PC-3 (cell line): ENCODE measurements at regions of chr18 and their contacts with region 1.

Region 1: DNA sequence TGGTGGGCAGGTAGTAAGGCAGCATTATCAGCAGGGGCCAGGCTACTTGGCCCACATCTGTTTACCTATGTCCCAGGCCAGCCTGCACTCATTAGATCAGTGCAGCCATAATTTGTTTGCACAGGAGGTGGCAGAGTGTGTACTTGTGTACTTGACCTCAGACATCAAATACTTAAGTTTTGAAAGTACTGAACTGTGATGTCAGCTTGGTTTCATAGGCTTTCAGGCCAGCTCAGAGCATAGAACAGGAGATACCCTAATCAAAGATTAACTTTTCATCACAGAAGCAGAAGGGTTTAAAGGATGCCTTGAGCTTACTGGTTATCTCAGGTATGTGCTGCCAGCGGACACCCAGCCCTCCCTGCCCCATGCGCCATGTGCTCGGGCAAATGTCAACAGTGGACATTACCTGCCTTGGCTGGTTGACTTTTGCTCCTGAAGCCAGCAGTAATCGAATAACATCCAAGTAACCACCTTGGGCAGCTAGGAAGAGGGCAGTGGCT is 33.2 kb downstream of the ANKRD29 start:
- DNase-seq: peak; percentile 37
- ATAC-seq: peak; percentile 28
- H3K4me3 ChIP-seq: no peak overlapping the region
- H3K27ac ChIP-seq: peak overlapping the region; percentile 98
- H3K4me1 ChIP-seq: peaks cover 49% of the 10 kb centered on the region
- H3K27me3 ChIP-seq: no peaks in the 10 kb centered on the region
- CTCF ChIP-seq: no peak

Region 2: GRCh38 chr18:23540867-23541266 is 88.6 kb before region 1 on chr18:
- CTCF ChIA-PET with region 1: no interaction called
- POLR2A ChIA-PET with region 1: no interaction called
- intact Hi-C with region 1: no loop called
- DNase-seq: no peak
- ATAC-seq: no peak
- H3K4me3 ChIP-seq: no peak overlapping the region
- H3K27ac ChIP-seq: no peak overlapping the region
- H3K4me1 ChIP-seq: no peaks in the 10 kb centered on the region
- H3K27me3 ChIP-seq: no peaks in the 10 kb centered on the region
- CTCF ChIP-seq: no peak

Region 3: GRCh38 chr18:23662309-23663263 is 33.1 kb after region 1 on chr18 and contains the start of gene ANKRD29:
- CTCF ChIA-PET with region 1: interaction called, 6 read pairs
- POLR2A ChIA-PET with region 1: no interaction called
- intact Hi-C with region 1: loop called (anchors 1 kb)
- DNase-seq: peak; percentile 65
- ATAC-seq: peak; percentile 80
- H3K4me3 ChIP-seq: peak within 1 kb of the TSS; percentile 97
- H3K27ac ChIP-seq: peak within 1 kb of the TSS; percentile 26; the same call in 1 of the 2 replicates
- H3K4me1 ChIP-seq: peaks cover 11% of the 10 kb centered on the region; the same call in 1 of the 2 replicates
- H3K27me3 ChIP-seq: no peaks in the 10 kb centered on the region
- CTCF ChIP-seq: no peak
- total RNA-seq, gene ANKRD29: 31.0 and 31.4 TPM in 2 replicates

Region 4: DNA sequence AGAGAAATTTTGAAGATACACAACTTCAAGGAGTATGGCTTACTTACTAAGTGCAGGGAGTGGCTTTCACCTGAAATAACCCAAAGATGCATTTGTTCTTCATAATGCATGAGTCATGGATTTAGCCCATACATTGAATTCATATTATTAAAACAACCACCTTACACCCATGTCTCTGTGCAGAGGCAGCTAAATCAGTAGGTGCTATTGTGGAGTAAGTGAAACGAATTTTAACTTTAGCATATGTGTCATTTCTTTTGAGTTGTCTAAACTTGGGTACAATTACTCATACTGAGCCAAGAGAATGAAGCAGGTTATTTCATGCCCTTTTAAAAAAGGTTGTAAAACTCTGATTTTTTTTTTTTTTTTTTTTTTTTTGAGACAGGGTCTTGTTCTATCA is 44.2 kb after region 1 on chr18:
- CTCF ChIA-PET with region 1: no interaction called
- POLR2A ChIA-PET with region 1: no interaction called
- intact Hi-C with region 1: no loop called
- DNase-seq: peak; percentile 77
- ATAC-seq: peak; percentile 81
- H3K4me3 ChIP-seq: no peak overlapping the region
- H3K27ac ChIP-seq: peak overlapping the region; percentile 46
- H3K4me1 ChIP-seq: peaks cover 16% of the 10 kb centered on the region
- H3K27me3 ChIP-seq: no peaks in the 10 kb centered on the region
- CTCF ChIP-seq: no peak

Region 5: GRCh38 chr18:24930971-24931370 is 1301.5 kb after region 1 on chr18:
- CTCF ChIA-PET with region 1: no interaction called
- POLR2A ChIA-PET with region 1: no interaction called
- intact Hi-C with region 1: no loop called
- DNase-seq: peak; percentile 48
- ATAC-seq: peak; percentile 57
- H3K4me3 ChIP-seq: no peak overlapping the region
- H3K27ac ChIP-seq: no peak overlapping the region
- H3K4me1 ChIP-seq: peaks cover 5% of the 10 kb centered on the region; the same call in 1 of the 2 replicates
- H3K27me3 ChIP-seq: peaks cover 21% of the 10 kb centered on the region
- CTCF ChIP-seq: no peak